ENCODE measurements at regions of chr12 and their contacts with region 1.

Region 1: GRCh38 chr12:15276088-15276698 is 46.1 kb upstream of the PTPRO start:
- DNase-seq: no peak
- H3K4me3 ChIP-seq: no peak overlapping the region
- H3K27ac ChIP-seq: no peak overlapping the region
- H3K4me1 ChIP-seq: peaks cover 14 to 42% (median 35%) of the 10 kb centered on the region in 4 donors
- H3K27me3 ChIP-seq: no peaks in the 10 kb centered on the region
- CTCF ChIP-seq: peak; percentile 66 to 73 (median 71)
- EP300 ChIP-seq: no peak
- POLR2A ChIP-seq: no peak

Region 2: DNA sequence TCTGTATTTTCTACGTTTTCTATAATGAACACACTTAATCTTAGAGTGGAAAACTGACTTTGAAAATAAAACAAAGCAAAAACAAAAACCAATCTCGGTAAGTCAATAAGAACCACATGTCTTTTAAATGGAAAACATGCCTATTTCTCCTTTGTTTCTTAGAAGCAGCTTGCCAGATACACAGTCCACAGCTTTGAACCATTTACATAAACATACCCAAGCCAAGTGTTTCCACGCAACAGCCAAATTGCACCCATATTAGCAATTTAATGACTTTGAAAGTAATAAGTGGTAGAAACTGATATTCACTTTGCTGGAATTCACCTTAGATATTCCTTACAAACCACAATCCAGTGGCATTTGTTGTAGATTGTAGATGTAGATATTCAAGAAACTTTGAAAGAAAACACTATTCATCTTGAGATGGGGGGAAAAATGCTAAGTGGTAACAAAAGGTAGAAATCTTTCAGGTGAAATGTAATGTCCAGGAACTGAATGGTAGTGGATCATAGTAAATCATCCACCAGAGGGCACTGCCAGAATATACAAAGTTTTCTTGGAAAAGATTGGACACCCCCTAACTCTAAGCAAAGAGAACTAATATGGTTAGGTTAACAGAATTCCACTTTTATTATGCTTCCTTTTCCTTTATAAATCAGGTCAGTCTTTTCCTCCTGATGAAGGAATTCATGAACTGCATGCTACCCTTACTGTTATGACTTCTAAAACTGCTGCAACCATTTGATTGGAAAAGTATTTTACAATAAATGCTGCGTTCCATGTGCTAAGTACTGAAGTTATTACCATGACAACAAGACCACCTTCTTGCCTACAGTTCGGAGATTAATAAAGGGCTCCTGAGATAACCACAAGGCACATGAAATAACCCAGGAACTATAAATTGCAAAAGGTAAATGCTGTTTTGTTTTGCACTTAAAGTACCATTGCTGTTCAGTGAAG is 124.8 kb before region 1 on chr12:
- intact Hi-C with region 1: loop called (anchors 2 kb)
- DNase-seq: no peak
- H3K4me3 ChIP-seq: no peak overlapping the region
- H3K27ac ChIP-seq: peak overlapping the region in 2 of 4 donors; percentile 22 to 33
- H3K4me1 ChIP-seq: peaks cover 12 to 53% (median 44%) of the 10 kb centered on the region in 4 donors
- H3K27me3 ChIP-seq: no peaks in the 10 kb centered on the region
- CTCF ChIP-seq: peak; percentile 56 to 65 (median 65)
- EP300 ChIP-seq: no peak
- POLR2A ChIP-seq: no peak

Region 3: GRCh38 chr12:15329891-15330290 is 53.7 kb after region 1 on chr12:
- intact Hi-C with region 1: no loop called
- DNase-seq: no peak
- H3K4me3 ChIP-seq: no peak overlapping the region
- H3K27ac ChIP-seq: no peak overlapping the region
- H3K4me1 ChIP-seq: no peaks in the 10 kb centered on the region
- H3K27me3 ChIP-seq: peaks cover 0 to 3% (median 0%) of the 10 kb centered on the region in 4 donors
- CTCF ChIP-seq: no peak
- EP300 ChIP-seq: no peak
- POLR2A ChIP-seq: no peak

Region 4: GRCh38 chr12:15522565-15523187 is 246.5 kb after region 1 on chr12:
- intact Hi-C with region 1: loop called (anchors 5 kb)
- DNase-seq: no peak
- H3K4me3 ChIP-seq: no peak overlapping the region
- H3K27ac ChIP-seq: no peak overlapping the region
- H3K4me1 ChIP-seq: no peaks in the 10 kb centered on the region
- H3K27me3 ChIP-seq: peaks cover 0 to 6% (median 2%) of the 10 kb centered on the region in 4 donors
- CTCF ChIP-seq: peak; percentile 33 to 47 (median 43)
- EP300 ChIP-seq: no peak
- POLR2A ChIP-seq: no peak

Region 5: GRCh38 chr12:15584366-15585041 is 308.3 kb after region 1 on chr12:
- intact Hi-C with region 1: loop called (anchors 5 kb)
- DNase-seq: no peak
- H3K4me3 ChIP-seq: no peak overlapping the region
- H3K27ac ChIP-seq: no peak overlapping the region
- H3K4me1 ChIP-seq: no peaks in the 10 kb centered on the region
- H3K27me3 ChIP-seq: peaks cover 0 to 13% (median 0%) of the 10 kb centered on the region in 4 donors
- CTCF ChIP-seq: peak; percentile 45 to 61 (median 48)
- EP300 ChIP-seq: no peak
- POLR2A ChIP-seq: no peak

Region 6: GRCh38 chr12:15789220-15790171 is 513.3 kb after region 1 on chr12 and contains the start of gene EPS8:
- intact Hi-C with region 1: loop called (anchors 10 kb)
- DNase-seq: peak; percentile 96
- H3K4me3 ChIP-seq: peak within 1 kb of the TSS; percentile 68 to 96 (median 84)
- H3K27ac ChIP-seq: peak within 1 kb of the TSS; percentile 86 to 94 (median 93)
- H3K4me1 ChIP-seq: peaks cover 0 to 27% (median 17%) of the 10 kb centered on the region in 4 donors
- H3K27me3 ChIP-seq: no peaks in the 10 kb centered on the region
- CTCF ChIP-seq: peak in 2 of 3 experiments; percentile 6 to 15
- EP300 ChIP-seq: no peak
- POLR2A ChIP-seq: peak; percentile 54
- total RNA-seq, gene EPS8: 54.4 to 120 (median 78.7) TPM

Region 7: GRCh38 chr12:15856097-15856982 is 580.1 kb after region 1 on chr12:
- intact Hi-C with region 1: loop called (anchors 2 kb)
- DNase-seq: no peak
- H3K4me3 ChIP-seq: no peak overlapping the region
- H3K27ac ChIP-seq: no peak overlapping the region
- H3K4me1 ChIP-seq: peaks cover 0 to 7% (median 0%) of the 10 kb centered on the region in 4 donors
- H3K27me3 ChIP-seq: no peaks in the 10 kb centered on the region
- CTCF ChIP-seq: peak; percentile 77 to 85 (median 78)
- EP300 ChIP-seq: no peak
- POLR2A ChIP-seq: no peak